Transverse colon (tissue), 4 donors: ENCODE measurements at regions of chr13 and their contacts with region 1.

Region 1: DNA sequence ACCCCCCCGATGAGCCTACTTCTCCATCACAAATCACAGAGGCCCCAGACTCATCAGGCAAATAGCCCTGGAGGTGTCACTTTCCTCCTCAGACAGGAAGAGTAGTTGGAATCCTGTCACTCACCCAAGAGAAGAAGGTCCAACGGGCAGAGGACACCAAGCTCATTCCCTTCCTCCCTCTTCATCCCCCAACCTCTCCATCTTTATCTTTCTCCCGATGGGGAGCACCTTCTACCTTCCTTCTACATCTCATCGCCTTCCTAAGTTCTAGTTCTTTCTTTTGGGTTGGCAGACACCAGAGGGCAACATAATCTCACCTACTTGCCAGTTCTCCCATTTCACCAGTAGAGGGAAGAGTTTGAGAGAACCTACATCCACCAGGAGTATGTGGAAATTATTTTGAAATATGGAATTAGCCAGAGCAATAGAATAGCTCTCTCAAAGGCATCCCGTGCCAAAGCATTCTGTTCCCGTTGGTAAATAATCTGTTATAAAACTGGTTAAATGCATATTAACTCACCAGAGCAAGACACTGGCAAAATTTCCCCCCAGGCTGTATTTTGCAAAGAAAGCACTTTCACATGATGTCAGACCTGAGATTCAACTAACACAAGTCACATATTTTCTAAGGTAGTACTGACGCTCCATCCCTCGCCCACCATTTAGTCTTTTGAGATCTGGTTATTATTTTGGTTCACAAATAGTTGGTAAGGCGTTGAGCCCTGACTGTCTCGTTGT is 55.0 kb downstream of the ZIC5 start:
- DNase-seq: no peak
- H3K4me3 ChIP-seq: no peak overlapping the region
- H3K27ac ChIP-seq: no peak overlapping the region
- H3K4me1 ChIP-seq: no peaks in the 10 kb centered on the region
- H3K27me3 ChIP-seq: peaks cover 10% of the 10 kb centered on the region
- CTCF ChIP-seq: peak; percentile 65 to 96 (median 84)
- EP300 ChIP-seq: no peak
- POLR2A ChIP-seq: no peak

Region 2: DNA sequence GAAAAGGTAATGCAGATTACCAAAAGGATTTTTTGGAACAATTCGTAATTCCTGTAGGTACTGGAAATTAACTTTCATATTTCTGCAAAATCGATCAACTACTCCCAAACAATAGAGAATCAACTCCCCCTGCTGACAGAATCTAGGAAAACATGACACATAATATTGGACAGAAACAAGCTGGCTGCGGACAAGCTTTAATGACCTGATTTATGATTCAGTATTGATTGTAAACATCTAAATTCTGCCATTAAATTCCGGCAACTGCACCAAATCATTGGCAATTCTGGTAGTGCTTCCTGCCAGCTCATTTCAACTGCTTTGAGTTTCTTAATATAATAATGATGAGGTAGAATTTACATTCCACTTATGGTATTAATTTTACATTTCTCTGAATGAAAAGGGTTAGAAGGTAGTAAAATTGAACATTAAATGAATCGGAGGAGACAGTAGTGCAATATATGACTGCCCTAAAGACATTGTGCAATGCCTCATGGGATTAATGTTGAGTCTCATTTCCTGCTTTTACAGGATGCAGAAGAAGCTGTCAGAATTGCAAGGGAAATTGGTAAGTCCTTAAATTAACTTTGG is 318.9 kb after region 1 on chr13:
- in situ Hi-C with region 1: loop called in 2 of 4 experiments (anchors 10 to 25 kb)
- intact Hi-C with region 1: no loop called
- DNase-seq: no peak
- H3K4me3 ChIP-seq: no peak overlapping the region
- H3K27ac ChIP-seq: no peak overlapping the region
- H3K4me1 ChIP-seq: peaks cover 0 to 31% (median 24%) of the 10 kb centered on the region in 4 donors
- H3K27me3 ChIP-seq: no peaks in the 10 kb centered on the region
- CTCF ChIP-seq: peak; percentile 42 to 72 (median 56)
- EP300 ChIP-seq: no peak
- POLR2A ChIP-seq: no peak